ENCODE measurements at regions of chr11 and their contacts with region 1.

Region 1: GRCh38 chr11:123707606-123708205 is 33.8 kb downstream of the ZNF202 start:
- DNase-seq: peak; percentile 14 to 77 (median 52)
- ATAC-seq: peak in 2 of 4 experiments; percentile 61 to 71
- H3K4me3 ChIP-seq: no peak overlapping the region
- H3K4me3 Mint-ChIP-seq: no peak overlapping the region
- H3K27ac ChIP-seq: no peak overlapping the region
- H3K27ac Mint-ChIP-seq: no peak overlapping the region
- H3K4me1 ChIP-seq: no peaks in the 10 kb centered on the region
- H3K4me1 Mint-ChIP-seq: peaks cover 0 to 3% (median 0%) of the 10 kb centered on the region in 3 donors
- H3K27me3 ChIP-seq: peaks cover 0 to 13% of the 10 kb centered on the region in 2 experiments
- H3K27me3 Mint-ChIP-seq: peaks cover 11 to 14% of the 10 kb centered on the region in 2 donors

Region 2: DNA sequence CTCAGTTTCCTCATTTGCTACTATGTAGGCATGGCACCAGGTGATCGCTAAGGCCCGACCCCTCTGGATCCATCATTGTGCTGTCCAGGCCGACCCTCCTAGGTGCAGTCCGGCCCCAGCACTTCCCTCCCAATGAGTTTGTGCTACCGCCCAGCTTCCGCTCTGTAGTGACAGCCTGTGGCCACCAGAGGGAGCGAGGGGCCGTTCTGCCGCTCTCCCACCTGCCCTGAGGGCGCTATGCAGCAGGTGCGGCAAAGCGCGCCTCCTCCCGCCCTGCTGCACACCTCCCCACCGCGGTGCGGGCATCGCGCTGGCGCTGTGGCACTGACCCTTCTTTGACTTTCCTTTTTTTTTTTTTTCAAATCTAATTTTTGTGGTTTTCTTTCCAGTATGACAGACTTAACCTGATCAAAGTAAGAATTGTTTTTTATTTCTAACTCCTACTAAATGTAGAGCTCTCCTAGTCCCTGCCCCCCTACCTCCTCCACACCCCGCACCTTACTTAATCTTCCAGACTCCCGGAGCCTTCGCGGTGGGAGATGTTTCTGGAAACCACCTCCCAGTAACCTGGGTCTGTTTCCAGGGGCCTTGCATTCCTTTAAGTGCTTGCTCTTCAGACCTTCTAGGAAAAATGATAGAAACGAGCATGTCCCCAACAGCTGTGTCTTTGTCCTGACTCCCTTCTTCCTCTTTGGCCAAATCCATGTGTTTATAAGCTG is 127.0 kb before region 1 on chr11:
- CTCF ChIA-PET with region 1: interaction called, 8 to 10 read pairs
- POLR2A ChIA-PET with region 1: no interaction called
- DNase-seq: peak; percentile 29 to 80 (median 55)
- ATAC-seq: peak; percentile 83 to 92 (median 86)
- H3K4me3 ChIP-seq: no peak overlapping the region
- H3K4me3 Mint-ChIP-seq: no peak overlapping the region
- H3K27ac ChIP-seq: no peak overlapping the region
- H3K27ac Mint-ChIP-seq: no peak overlapping the region
- H3K4me1 ChIP-seq: peaks cover 0 to 17% of the 10 kb centered on the region in 2 experiments
- H3K4me1 Mint-ChIP-seq: peaks cover 18 to 25% (median 19%) of the 10 kb centered on the region in 3 donors
- H3K27me3 ChIP-seq: peaks cover 0 to 3% of the 10 kb centered on the region in 2 experiments
- H3K27me3 Mint-ChIP-seq: no peaks in the 10 kb centered on the region

Region 3: GRCh38 chr11:123640677-123641494 is 66.8 kb before region 1 on chr11:
- CTCF ChIA-PET with region 1: interaction called, 16 to 66 read pairs
- POLR2A ChIA-PET with region 1: no interaction called
- DNase-seq: peak in 34 of 35 experiments; percentile 2 to 71 (median 45)
- ATAC-seq: peak; percentile 40 to 78 (median 56)
- H3K4me3 ChIP-seq: no peak overlapping the region
- H3K4me3 Mint-ChIP-seq: no peak overlapping the region
- H3K27ac ChIP-seq: no peak overlapping the region
- H3K27ac Mint-ChIP-seq: no peak overlapping the region
- H3K4me1 ChIP-seq: peaks cover 0 to 5% of the 10 kb centered on the region in 2 experiments
- H3K4me1 Mint-ChIP-seq: peaks cover 0 to 2% (median 0%) of the 10 kb centered on the region in 3 donors
- H3K27me3 ChIP-seq: peaks cover 0 to 30% of the 10 kb centered on the region in 2 experiments
- H3K27me3 Mint-ChIP-seq: peaks cover 18 to 32% of the 10 kb centered on the region in 2 donors

Region 4: GRCh38 chr11:123681030-123681429 is 26.7 kb before region 1 on chr11:
- CTCF ChIA-PET with region 1: interaction called, 3 to 12 read pairs
- POLR2A ChIA-PET with region 1: no interaction called
- DNase-seq: peak in 19 of 35 experiments; percentile 3 to 74 (median 24)
- ATAC-seq: peak; percentile 83 to 96 (median 88)
- H3K4me3 ChIP-seq: no peak overlapping the region
- H3K4me3 Mint-ChIP-seq: peak overlapping the region in 1 of 3 donors; percentile 30
- H3K27ac ChIP-seq: peak overlapping the region; percentile 1
- H3K27ac Mint-ChIP-seq: peak overlapping the region; percentile 70 to 89
- H3K4me1 ChIP-seq: peaks cover 4 to 20% of the 10 kb centered on the region in 2 experiments
- H3K4me1 Mint-ChIP-seq: peaks cover 15 to 25% (median 24%) of the 10 kb centered on the region in 3 donors
- H3K27me3 ChIP-seq: peaks cover 0 to 2% of the 10 kb centered on the region in 2 experiments
- H3K27me3 Mint-ChIP-seq: peaks cover 2 to 4% of the 10 kb centered on the region in 2 donors

Measured in T-cell (primary cell).